ENCODE measurements at regions of chr10 and their contacts with region 1.

Region 1: DNA sequence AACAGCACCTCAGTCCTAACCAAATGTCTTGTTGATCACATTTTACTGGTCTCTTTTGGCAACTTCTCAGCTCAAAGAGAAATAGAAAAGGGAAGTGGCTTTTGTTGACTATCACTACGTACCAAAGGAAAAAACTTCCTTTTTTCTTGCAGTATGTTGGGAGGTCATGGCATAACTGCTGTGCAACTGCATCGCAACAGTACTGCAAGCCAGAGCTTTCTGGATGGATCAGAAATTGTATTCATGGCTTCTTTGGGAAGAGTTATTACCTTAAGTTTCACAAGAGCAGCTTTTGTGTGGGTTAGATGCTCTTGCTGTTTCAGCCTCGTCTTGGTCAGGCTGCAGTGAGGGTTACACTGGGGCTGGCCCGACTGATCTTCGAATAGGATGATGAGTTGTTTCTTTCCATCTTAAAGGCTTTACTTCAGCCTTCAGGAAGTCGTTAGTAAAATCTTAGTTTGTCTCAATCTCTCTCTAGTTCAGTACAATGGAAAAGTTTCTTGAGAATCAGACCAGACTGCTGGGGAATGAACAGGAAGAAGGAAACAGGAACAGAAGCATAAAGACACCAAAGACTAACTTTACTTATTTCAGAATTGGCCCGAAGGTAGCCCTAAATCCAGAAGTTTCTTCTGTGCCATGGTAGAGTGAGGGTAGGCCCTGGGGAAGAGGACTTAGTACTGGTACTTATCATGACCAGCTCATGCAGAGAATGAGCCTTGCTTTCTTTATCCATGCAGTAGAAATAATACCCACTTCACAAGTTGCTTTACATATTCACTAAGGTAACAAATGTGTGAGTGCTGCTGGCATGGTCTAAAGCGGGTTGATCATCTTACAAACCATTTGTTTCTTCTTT is 153.6 kb downstream of the CELF2 start:
- DNase-seq: peak in 2 of 35 experiments; percentile 26 to 37
- ATAC-seq: peak in 1 of 4 experiments; percentile 7
- H3K4me3 ChIP-seq: peak overlapping the region; percentile 86 to 96
- H3K4me3 Mint-ChIP-seq: no peak overlapping the region
- H3K27ac ChIP-seq: peak overlapping the region; percentile 94
- H3K27ac Mint-ChIP-seq: no peak overlapping the region
- H3K4me1 ChIP-seq: peaks cover 63 to 73% of the 10 kb centered on the region in 2 experiments
- H3K4me1 Mint-ChIP-seq: peaks cover 4 to 7% (median 6%) of the 10 kb centered on the region in 3 donors
- H3K27me3 ChIP-seq: no peaks in the 10 kb centered on the region
- H3K27me3 Mint-ChIP-seq: no peaks in the 10 kb centered on the region

Region 2: DNA sequence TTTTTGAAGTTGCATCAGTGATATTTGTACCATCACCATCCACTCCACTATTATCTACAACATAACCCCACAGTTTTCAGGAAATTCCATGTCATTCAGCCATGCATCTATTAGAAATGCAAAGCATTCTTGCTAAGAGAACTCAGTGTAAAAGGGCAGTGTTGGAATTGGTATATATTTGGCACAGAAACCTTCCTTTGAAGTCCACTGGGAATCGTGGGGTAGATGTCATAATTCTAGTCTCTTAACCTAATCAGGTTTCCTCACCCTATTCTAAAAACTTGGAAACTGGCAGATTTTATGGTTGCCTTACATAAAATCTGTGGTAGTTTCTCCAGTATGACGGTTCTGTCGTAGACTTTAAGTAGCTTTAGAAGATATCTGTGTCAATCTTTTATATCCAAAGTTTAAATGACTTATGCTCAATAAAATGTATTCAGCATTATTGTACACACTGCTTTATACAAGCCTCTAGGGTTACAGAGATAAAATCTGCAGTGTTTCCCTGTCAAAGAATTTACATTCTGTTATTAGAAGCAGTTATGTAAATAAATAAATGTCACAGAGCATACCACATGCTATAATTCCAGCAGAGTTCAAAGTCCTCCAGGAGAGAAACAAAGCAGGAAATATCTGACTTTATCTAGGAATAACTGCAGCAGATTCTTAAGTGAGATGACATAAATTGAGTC is 857.9 kb before region 1 on chr10:
- CTCF ChIA-PET with region 1: no interaction called
- POLR2A ChIA-PET with region 1: no interaction called
- DNase-seq: no peak
- ATAC-seq: no peak
- H3K4me3 ChIP-seq: no peak overlapping the region
- H3K4me3 Mint-ChIP-seq: no peak overlapping the region
- H3K27ac ChIP-seq: no peak overlapping the region
- H3K27ac Mint-ChIP-seq: no peak overlapping the region
- H3K4me1 ChIP-seq: no peaks in the 10 kb centered on the region
- H3K4me1 Mint-ChIP-seq: no peaks in the 10 kb centered on the region
- H3K27me3 ChIP-seq: no peaks in the 10 kb centered on the region
- H3K27me3 Mint-ChIP-seq: peaks cover 0 to 11% of the 10 kb centered on the region in 2 donors

Region 3: DNA sequence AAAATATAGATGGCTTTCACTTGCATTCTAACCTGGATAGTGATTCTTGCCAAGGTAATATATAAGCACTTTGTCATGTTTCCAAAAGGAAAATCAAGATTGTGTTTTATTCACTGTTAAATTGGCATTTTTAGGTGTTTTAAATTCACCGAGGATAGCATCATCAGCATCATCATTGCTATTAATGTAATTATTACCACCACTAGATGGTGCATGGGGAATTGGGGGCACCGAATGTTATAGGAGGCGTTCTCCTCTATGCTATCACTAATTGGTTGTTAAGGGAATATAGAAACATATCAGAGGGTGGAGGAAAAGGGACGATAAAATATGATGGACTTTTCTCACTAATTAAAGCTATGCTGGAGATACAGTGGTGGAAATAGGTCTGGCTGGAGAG is 58.1 kb before region 1 on chr10:
- CTCF ChIA-PET with region 1: interaction called, 21 to 40 read pairs
- POLR2A ChIA-PET with region 1: interaction called in 1 of 2 experiments, 3 read pairs
- DNase-seq: peak in 26 of 35 experiments; percentile 7 to 77 (median 27)
- ATAC-seq: peak; percentile 56 to 96 (median 82)
- H3K4me3 ChIP-seq: no peak overlapping the region
- H3K4me3 Mint-ChIP-seq: peak overlapping the region in 1 of 3 donors; percentile 37
- H3K27ac ChIP-seq: no peak overlapping the region
- H3K27ac Mint-ChIP-seq: peak overlapping the region in 1 of 2 donors; percentile 82
- H3K4me1 ChIP-seq: peaks cover 7 to 8% of the 10 kb centered on the region in 2 experiments
- H3K4me1 Mint-ChIP-seq: peaks cover 24 to 40% (median 28%) of the 10 kb centered on the region in 3 donors
- H3K27me3 ChIP-seq: no peaks in the 10 kb centered on the region
- H3K27me3 Mint-ChIP-seq: no peaks in the 10 kb centered on the region

Region 4: DNA sequence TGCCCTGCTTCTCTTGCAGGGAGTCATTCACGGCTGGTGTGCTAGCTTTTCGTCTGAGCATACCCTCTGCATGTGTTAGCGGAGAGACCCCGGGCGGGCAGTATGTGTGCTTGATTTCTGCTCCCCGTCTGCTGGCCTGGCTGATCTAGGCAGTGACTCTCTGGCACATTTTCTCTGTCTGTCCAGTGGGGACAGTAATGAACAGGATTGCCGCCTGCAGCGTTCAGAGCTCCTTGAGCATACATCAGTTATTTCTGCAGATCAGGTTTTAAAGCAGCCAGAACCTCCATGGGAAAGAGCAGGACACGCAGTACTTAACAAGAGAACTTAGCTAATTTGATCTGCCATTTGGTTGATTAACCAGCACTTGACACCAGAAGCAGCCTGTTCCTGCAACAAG is 88.9 kb after region 1 on chr10:
- CTCF ChIA-PET with region 1: no interaction called
- POLR2A ChIA-PET with region 1: interaction called, 8 to 10 read pairs
- DNase-seq: no peak
- ATAC-seq: no peak
- H3K4me3 ChIP-seq: no peak overlapping the region
- H3K4me3 Mint-ChIP-seq: no peak overlapping the region
- H3K27ac ChIP-seq: no peak overlapping the region
- H3K27ac Mint-ChIP-seq: peak overlapping the region; percentile 50 to 61
- H3K4me1 ChIP-seq: peaks cover 12 to 45% of the 10 kb centered on the region in 2 experiments
- H3K4me1 Mint-ChIP-seq: peaks cover 80 to 97% (median 92%) of the 10 kb centered on the region in 3 donors
- H3K27me3 ChIP-seq: no peaks in the 10 kb centered on the region
- H3K27me3 Mint-ChIP-seq: no peaks in the 10 kb centered on the region